ENCODE measurements at regions of chr20 and their contacts with region 1.

Region 1: GRCh38 chr20:8043687-8044282 is 24.2 kb upstream of the TMX4 start:
- DNase-seq: no peak
- ATAC-seq: peak; percentile 86
- H3K4me3 ChIP-seq: no peak overlapping the region
- H3K27ac ChIP-seq: no peak overlapping the region
- H3K4me1 ChIP-seq: no peaks in the 10 kb centered on the region
- H3K27me3 ChIP-seq: no peaks in the 10 kb centered on the region
- CTCF ChIP-seq: peak; percentile 50 to 72 (median 62); a peak in 5 of 6 replicates
- EP300 ChIP-seq: no peak
- POLR2A ChIP-seq: no peak
- RAD21 ChIP-seq: peak; percentile 68

Region 2: DNA sequence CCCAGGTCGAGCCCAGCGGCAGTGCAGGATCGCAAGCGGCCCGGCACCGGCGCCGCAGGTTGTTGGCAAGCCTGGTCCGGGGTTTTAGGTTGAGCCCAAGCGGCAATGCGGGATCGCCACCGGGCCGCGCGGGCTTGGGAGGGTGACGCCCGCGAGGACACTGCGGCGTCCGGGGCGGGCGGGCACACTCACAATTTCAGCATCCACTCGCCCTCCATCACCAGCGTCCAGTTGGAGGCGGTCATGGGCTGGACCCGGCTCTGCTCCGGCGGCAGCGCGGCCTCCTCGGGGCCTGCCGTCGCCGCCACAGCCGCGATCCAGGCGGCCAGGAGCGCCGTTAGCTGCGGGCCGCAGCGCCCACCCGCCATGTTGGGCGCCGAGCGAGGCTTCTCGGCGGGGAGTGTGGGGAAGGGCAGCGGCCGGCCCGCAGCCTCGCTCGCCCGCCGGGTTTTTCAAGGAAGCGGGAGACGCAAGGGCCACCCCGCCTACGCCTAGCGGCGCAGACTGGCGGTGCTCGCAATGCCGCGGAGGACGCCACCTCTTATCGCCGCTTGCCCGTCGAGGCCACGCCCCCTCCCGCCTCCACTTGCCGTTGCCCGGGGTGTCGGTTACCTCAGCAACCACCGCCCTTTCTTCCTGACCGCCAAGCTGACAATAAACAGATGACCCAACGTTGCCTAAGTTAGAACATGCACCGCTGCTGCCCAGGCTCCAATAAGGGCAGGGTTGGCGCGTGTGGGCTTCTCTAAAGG is 24.4 kb before region 1 on chr20 and contains the start of gene TMX4:
- CTCF ChIA-PET with region 1: interaction called, 22 read pairs
- POLR2A ChIA-PET with region 1: no interaction called
- RAD21 ChIA-PET with region 1: interaction called, 3 read pairs
- SMC1A ChIA-PET with region 1: interaction called, 10 read pairs
- in situ Hi-C with region 1: no loop called
- intact Hi-C with region 1: no loop called
- DNase-seq: peak; percentile 76
- ATAC-seq: peak; percentile 93
- H3K4me3 ChIP-seq: peak within 1 kb of the TSS; percentile 70
- H3K27ac ChIP-seq: peak within 1 kb of the TSS; percentile 74
- H3K4me1 ChIP-seq: peaks cover 12% of the 10 kb centered on the region
- H3K27me3 ChIP-seq: no peaks in the 10 kb centered on the region
- CTCF ChIP-seq: peak in 2 of 3 experiments; percentile 8 to 36; a peak in 2 of 6 replicates
- EP300 ChIP-seq: peak; percentile 24 to 61; a peak in 2 of 4 replicates
- POLR2A ChIP-seq: peak; percentile 94
- RAD21 ChIP-seq: no peak
- polyA plus RNA-seq, gene TMX4: 3.9 to 4.4 TPM

Region 3: GRCh38 chr20:8033151-8033841 is 10.5 kb before region 1 on chr20:
- CTCF ChIA-PET with region 1: interaction called, 19 read pairs
- POLR2A ChIA-PET with region 1: no interaction called
- RAD21 ChIA-PET with region 1: interaction called, 3 read pairs
- SMC1A ChIA-PET with region 1: interaction called, 7 read pairs
- in situ Hi-C with region 1: no loop called
- intact Hi-C with region 1: no loop called
- DNase-seq: no peak
- ATAC-seq: no peak
- H3K4me3 ChIP-seq: no peak overlapping the region
- H3K27ac ChIP-seq: no peak overlapping the region
- H3K4me1 ChIP-seq: no peaks in the 10 kb centered on the region
- H3K27me3 ChIP-seq: no peaks in the 10 kb centered on the region
- CTCF ChIP-seq: no peak
- EP300 ChIP-seq: no peak
- POLR2A ChIP-seq: no peak
- RAD21 ChIP-seq: no peak

Region 4: DNA sequence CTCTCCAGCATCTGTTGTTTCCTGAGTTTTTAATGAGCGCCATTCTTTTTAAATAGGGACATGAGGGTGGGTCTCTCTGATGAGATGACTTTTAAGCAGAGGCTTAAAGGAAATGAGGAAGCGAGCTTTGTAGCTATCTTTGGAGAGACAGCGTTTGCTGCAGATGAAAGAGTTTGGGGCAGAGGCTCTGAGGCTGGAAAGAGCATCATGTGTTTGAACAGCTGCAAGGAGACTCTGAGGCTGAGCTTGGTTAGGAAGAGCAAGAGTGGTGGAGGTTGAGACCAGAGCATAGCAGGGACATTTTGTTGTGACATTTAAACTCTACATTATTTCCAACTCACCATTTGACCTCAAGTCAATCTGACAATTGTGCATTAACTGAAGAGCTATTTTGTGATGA is 14.1 kb after region 1 on chr20:
- CTCF ChIA-PET with region 1: interaction called, 14 read pairs
- POLR2A ChIA-PET with region 1: no interaction called
- RAD21 ChIA-PET with region 1: interaction called, 3 read pairs
- SMC1A ChIA-PET with region 1: interaction called, 4 read pairs
- in situ Hi-C with region 1: no loop called
- intact Hi-C with region 1: no loop called
- DNase-seq: no peak
- ATAC-seq: no peak
- H3K4me3 ChIP-seq: no peak overlapping the region
- H3K27ac ChIP-seq: no peak overlapping the region
- H3K4me1 ChIP-seq: no peaks in the 10 kb centered on the region
- H3K27me3 ChIP-seq: no peaks in the 10 kb centered on the region
- CTCF ChIP-seq: no peak
- EP300 ChIP-seq: no peak
- POLR2A ChIP-seq: no peak
- RAD21 ChIP-seq: no peak

Region 5: GRCh38 chr20:8255945-8256632 is 212.3 kb after region 1 on chr20:
- CTCF ChIA-PET with region 1: no interaction called
- POLR2A ChIA-PET with region 1: no interaction called
- RAD21 ChIA-PET with region 1: no interaction called
- SMC1A ChIA-PET with region 1: no interaction called
- in situ Hi-C with region 1: no loop called
- intact Hi-C with region 1: no loop called
- DNase-seq: no peak
- ATAC-seq: no peak
- H3K4me3 ChIP-seq: no peak overlapping the region
- H3K27ac ChIP-seq: no peak overlapping the region
- H3K4me1 ChIP-seq: no peaks in the 10 kb centered on the region
- H3K27me3 ChIP-seq: 0 out of 4 replicates have a peak, but pooled peaks cover 0 to 2% of the 10 kb centered on the region in 2 experiments
- CTCF ChIP-seq: no peak
- EP300 ChIP-seq: no peak
- POLR2A ChIP-seq: no peak
- RAD21 ChIP-seq: no peak

Region 6: GRCh38 chr20:8305449-8305978 is 261.7 kb after region 1 on chr20:
- CTCF ChIA-PET with region 1: interaction called, 6 read pairs
- POLR2A ChIA-PET with region 1: no interaction called
- RAD21 ChIA-PET with region 1: interaction called, 4 read pairs
- SMC1A ChIA-PET with region 1: interaction called, 3 read pairs
- in situ Hi-C with region 1: no loop called
- intact Hi-C with region 1: loop called (anchors 5 kb)
- DNase-seq: peak; percentile 30
- ATAC-seq: peak; percentile 95
- H3K4me3 ChIP-seq: no peak overlapping the region
- H3K27ac ChIP-seq: no peak overlapping the region
- H3K4me1 ChIP-seq: no peaks in the 10 kb centered on the region
- H3K27me3 ChIP-seq: no peaks in the 10 kb centered on the region
- CTCF ChIP-seq: peak; percentile 65 to 80 (median 79)
- EP300 ChIP-seq: no peak
- POLR2A ChIP-seq: no peak
- RAD21 ChIP-seq: peak; percentile 60

Measured in GM12878 (cell line).